ENCODE measurements at regions of chr2 and their contacts with region 1.

Region 1: GRCh38 chr2:12155303-12156051 is 409.0 kb downstream of the LPIN1 start:
- DNase-seq: peak; percentile 97
- H3K4me3 ChIP-seq: no peak overlapping the region
- H3K27ac ChIP-seq: peak overlapping the region; percentile 85
- H3K4me1 ChIP-seq: peaks cover 21% of the 10 kb centered on the region
- H3K27me3 ChIP-seq: peaks cover 0 to 2% of the 10 kb centered on the region in 2 experiments
- CTCF ChIP-seq: no peak
- POLR2A ChIP-seq: peak; percentile 36

Region 2: DNA sequence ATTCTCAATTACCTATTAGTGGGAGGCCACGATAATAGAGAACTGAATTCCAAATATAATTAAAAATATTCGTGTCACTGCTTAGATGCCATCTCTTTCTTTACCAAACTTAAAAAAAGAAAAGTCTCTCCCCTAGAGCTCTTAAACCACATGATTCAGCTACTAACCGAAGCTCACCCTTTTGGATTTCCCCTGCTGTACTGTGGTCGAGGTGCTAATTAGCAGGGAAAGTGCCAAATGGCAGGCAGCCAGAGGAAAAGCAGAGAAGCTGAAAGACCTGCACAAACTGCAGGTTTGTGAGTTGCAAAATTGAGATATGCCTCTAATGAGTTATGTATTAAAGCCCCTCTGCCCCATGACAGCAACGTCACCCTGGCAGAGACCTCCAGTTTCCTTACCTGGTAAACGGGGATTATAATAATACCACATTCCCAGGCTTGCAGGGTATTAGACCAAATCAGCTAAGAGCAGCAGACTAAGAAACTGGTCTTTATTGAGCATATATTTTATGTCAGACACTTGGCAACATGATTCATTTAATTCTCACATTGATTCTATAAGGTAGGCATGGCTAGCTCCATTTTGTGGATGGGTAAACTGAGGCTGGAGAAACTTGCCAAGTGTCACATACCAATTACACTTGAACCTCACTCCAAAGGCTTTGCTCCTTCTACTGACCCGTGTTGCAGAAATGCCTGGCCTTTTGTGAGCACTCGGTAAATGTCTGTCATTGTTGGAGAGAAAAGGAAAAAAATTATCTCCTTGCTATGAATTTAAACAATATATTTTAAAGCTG is 149.4 kb before region 1 on chr2:
- CTCF ChIA-PET with region 1: interaction called, 3 read pairs
- POLR2A ChIA-PET with region 1: no interaction called
- dilution Hi-C with region 1: no loop called
- intact Hi-C with region 1: loop called (anchors 5 kb)
- DNase-seq: peak; percentile 51
- H3K4me3 ChIP-seq: no peak overlapping the region
- H3K27ac ChIP-seq: peak overlapping the region; percentile 4
- H3K4me1 ChIP-seq: peaks cover 27% of the 10 kb centered on the region
- H3K27me3 ChIP-seq: no peaks in the 10 kb centered on the region
- CTCF ChIP-seq: no peak
- POLR2A ChIP-seq: no peak

Region 3: DNA sequence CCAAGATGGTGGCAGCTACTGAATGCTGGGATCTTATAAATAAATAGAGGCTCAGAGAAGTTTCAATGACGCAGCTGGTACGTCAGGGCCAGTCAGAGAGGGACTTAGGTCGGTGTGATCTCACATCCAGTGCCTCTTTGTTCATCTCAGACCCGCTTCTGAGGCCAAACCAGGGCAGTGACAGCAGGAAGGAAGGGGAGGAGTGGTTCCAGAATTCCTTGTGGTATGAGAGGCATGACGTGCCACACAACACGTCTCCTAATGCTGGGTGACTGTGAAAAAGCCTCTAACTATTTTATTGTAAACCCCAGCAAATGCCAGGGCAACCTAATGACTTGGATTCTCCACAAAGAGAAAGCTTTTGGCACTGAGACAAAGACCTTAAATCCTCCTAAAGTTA is 14.2 kb after region 1 on chr2:
- CTCF ChIA-PET with region 1: interaction called, 11 read pairs
- POLR2A ChIA-PET with region 1: interaction called, 3 read pairs
- dilution Hi-C with region 1: no loop called
- intact Hi-C with region 1: loop called (anchors 1 kb)
- DNase-seq: peak; percentile 76
- H3K4me3 ChIP-seq: no peak overlapping the region
- H3K27ac ChIP-seq: peak overlapping the region; percentile 24
- H3K4me1 ChIP-seq: peaks cover 19% of the 10 kb centered on the region
- H3K27me3 ChIP-seq: no peaks in the 10 kb centered on the region
- CTCF ChIP-seq: no peak
- POLR2A ChIP-seq: no peak

Region 4: GRCh38 chr2:12176623-12177454 is 21.4 kb after region 1 on chr2:
- CTCF ChIA-PET with region 1: no interaction called
- POLR2A ChIA-PET with region 1: no interaction called
- dilution Hi-C with region 1: no loop called
- intact Hi-C with region 1: loop called (anchors 1 kb)
- DNase-seq: peak; percentile 49
- H3K4me3 ChIP-seq: no peak overlapping the region
- H3K27ac ChIP-seq: peak overlapping the region; percentile 12
- H3K4me1 ChIP-seq: peaks cover 20% of the 10 kb centered on the region
- H3K27me3 ChIP-seq: no peaks in the 10 kb centered on the region
- CTCF ChIP-seq: no peak
- POLR2A ChIP-seq: no peak

Region 5: GRCh38 chr2:12192762-12193161 is 37.3 kb after region 1 on chr2:
- CTCF ChIA-PET with region 1: no interaction called
- POLR2A ChIA-PET with region 1: no interaction called
- dilution Hi-C with region 1: no loop called
- intact Hi-C with region 1: loop called (anchors 1 kb)
- DNase-seq: peak; percentile 58
- H3K4me3 ChIP-seq: no peak overlapping the region
- H3K27ac ChIP-seq: peak overlapping the region; percentile 58
- H3K4me1 ChIP-seq: peaks cover 13% of the 10 kb centered on the region
- H3K27me3 ChIP-seq: no peaks in the 10 kb centered on the region
- CTCF ChIP-seq: no peak
- POLR2A ChIP-seq: no peak

Region 6: DNA sequence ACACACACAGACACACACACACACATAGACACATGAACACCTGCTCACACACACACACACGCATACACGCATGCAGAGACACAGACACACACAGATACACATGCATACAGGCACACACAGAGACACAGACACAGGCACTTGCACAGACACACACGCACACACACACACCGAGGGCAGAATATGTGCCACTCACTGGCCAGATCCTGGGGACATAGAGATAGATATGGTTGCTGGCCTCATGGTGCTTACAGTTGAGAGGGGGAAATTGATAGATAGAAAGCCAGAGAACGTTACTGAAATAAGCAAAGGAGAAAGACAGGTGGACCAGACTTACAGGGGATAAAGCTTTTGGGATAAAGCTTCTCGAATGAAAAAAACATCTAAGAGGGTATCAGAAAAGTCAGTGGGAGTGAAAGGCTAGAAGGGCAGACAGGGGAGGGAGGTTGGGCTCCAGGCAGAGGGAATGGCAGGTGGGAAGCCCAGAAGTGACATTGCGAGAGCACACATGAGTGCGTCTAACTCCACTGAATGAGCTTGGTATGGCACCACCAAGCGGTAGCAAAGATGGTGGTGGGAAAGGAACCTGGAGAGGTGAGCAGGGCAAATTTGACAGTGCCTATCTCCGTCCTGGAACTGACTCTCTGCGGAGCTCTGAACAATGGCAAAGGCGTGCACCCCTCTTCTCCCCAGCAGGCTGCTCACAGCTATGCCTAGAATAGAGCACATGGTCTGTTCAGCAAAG is 171.1 kb after region 1 on chr2:
- CTCF ChIA-PET with region 1: no interaction called
- POLR2A ChIA-PET with region 1: no interaction called
- dilution Hi-C with region 1: no loop called
- intact Hi-C with region 1: loop called (anchors 5 kb)
- DNase-seq: no peak
- H3K4me3 ChIP-seq: no peak overlapping the region
- H3K27ac ChIP-seq: no peak overlapping the region
- H3K4me1 ChIP-seq: peaks cover 8% of the 10 kb centered on the region
- H3K27me3 ChIP-seq: no peaks in the 10 kb centered on the region
- CTCF ChIP-seq: no peak
- POLR2A ChIP-seq: no peak

Region 7: DNA sequence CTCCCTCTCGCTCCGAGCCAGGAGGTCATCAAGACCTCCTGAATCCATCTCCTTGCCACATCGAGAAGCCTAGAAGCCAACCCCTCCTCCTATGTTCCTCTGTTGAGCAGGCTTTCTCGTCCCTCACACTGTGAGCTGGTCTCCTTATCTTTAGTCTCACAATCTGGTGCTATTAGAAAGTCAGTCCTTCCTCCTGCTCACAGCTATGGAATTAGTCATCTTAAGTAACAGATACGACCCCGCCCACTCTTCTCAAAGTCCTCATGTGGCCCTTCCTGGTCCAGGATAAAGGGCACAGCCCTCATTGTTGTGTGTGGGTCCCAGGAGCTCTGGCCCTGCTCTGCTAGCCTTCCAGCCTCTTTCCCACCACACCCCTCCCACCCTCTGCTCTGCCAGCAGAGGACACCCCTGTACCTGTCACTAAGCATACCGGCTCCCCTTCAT is 519.9 kb after region 1 on chr2:
- CTCF ChIA-PET with region 1: no interaction called
- POLR2A ChIA-PET with region 1: no interaction called
- dilution Hi-C with region 1: no loop called
- intact Hi-C with region 1: loop called (anchors 5 kb)
- DNase-seq: peak; percentile 69
- H3K4me3 ChIP-seq: no peak overlapping the region
- H3K27ac ChIP-seq: peak overlapping the region; percentile 81
- H3K4me1 ChIP-seq: peaks cover 33% of the 10 kb centered on the region
- H3K27me3 ChIP-seq: no peaks in the 10 kb centered on the region
- CTCF ChIP-seq: no peak
- POLR2A ChIP-seq: no peak